HepG2 (cell line): ENCODE measurements at regions of chr20 and their contacts with region 1.

Region 1: GRCh38 chr20:2276015-2276414 is 19.8 kb upstream of the TGM3 start:
- DNase-seq: peak; percentile 73
- ATAC-seq: peak; percentile 92
- H3K4me3 ChIP-seq: no peak overlapping the region
- H3K27ac ChIP-seq: no peak overlapping the region
- H3K4me1 ChIP-seq: peaks cover 10% of the 10 kb centered on the region
- H3K27me3 ChIP-seq: peaks cover 0 to 11% of the 10 kb centered on the region in 2 experiments; a peak in 2 of 5 replicates
- CTCF ChIP-seq: no peak; the same call in 1 of the 2 replicates
- EP300 ChIP-seq: 0 out of 4 replicates have a peak, but pooled peaks of 1 of the 2 experiments have one; percentile 39
- POLR2A ChIP-seq: no peak
- RAD21 ChIP-seq: peak; percentile 39; the same call in 1 of the 2 replicates

Region 2: DNA sequence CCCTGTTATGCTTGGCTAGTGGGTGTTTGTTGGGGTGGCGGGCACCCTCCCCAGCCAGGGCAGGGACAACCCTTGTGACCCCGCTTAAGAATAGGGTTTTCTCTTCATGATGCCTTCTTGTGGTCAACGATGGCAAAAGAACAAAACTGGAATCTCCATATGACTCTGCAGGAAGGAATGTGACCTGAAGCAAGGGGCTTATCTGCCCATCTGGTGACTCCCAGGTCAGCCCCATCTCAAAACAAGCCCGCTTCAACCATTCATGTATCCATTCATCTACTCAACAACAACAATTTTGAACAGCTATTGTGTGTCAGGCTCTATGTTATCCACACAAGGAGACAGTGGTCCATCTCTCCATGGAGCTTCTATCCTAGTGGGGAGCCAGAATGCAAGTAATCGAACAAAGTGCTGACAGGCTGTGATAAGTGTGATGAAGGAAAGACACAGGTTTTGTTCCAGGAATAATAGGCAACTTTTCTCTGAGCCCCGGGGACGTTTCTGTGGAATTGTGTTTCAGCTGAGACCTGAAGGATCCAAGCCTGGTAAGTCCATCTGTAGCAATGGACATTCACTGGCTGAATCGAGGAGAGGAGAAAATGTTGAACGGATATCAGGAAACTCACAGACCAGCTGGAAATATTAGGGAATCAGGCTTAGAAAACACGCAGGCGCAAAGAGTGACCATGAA is 73.9 kb after region 1 on chr20:
- CTCF ChIA-PET with region 1: no interaction called
- POLR2A ChIA-PET with region 1: no interaction called
- in situ Hi-C with region 1: no loop called
- intact Hi-C with region 1: loop called (anchors 2 kb)
- DNase-seq: peak; percentile 39
- ATAC-seq: no peak
- H3K4me3 ChIP-seq: no peak overlapping the region
- H3K27ac ChIP-seq: no peak overlapping the region
- H3K4me1 ChIP-seq: peaks cover 4% of the 10 kb centered on the region; the same call in 1 of the 2 replicates
- H3K27me3 ChIP-seq: peaks cover 0 to 6% of the 10 kb centered on the region in 2 experiments; a peak in 2 of 5 replicates
- CTCF ChIP-seq: no peak
- EP300 ChIP-seq: no peak
- POLR2A ChIP-seq: no peak
- RAD21 ChIP-seq: no peak